ENCODE measurements at regions of chr19 and their contacts with region 1.

Region 1: DNA sequence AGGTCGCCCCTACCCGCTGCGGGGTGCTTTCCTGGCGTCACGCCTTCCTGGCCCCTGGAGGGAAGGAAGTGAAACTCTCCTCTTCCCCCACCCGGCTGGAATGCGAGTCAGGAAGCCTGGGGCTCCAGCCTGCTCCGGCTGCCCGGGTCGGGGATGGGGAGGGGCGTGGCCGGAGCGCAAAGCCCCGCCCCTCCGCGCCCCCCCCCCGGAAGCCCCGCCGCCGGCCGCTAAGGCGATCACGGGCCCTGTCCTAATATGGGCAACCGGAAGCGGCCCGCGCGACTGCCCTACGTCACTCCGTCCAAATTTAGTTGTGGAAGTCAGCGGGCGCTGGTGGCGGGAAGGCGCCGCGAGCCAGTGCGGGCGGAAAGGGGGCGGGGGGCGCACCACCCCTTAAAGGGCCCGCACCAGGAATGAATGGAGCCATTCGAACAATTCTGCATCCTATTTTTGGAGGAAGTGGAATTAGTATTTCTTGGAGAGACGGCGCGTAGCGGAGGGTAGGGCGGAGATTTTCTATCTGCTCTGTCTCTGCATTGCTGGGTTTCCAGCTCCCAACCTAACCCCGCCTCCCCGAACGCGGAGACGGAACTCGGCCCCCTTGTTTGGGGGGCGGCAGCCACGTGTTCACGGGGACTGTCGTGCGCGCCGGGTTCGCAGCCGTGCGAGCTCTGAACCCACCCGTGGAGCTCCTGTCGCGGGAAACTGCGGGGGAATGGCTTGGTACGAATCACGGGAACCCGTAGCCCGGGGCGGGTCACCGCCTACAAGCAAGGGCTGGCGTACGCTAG is 1.6 kb downstream of the IER2 start:
- DNase-seq: peak; percentile 94
- CTCF ChIP-seq: no peak

Region 2: DNA sequence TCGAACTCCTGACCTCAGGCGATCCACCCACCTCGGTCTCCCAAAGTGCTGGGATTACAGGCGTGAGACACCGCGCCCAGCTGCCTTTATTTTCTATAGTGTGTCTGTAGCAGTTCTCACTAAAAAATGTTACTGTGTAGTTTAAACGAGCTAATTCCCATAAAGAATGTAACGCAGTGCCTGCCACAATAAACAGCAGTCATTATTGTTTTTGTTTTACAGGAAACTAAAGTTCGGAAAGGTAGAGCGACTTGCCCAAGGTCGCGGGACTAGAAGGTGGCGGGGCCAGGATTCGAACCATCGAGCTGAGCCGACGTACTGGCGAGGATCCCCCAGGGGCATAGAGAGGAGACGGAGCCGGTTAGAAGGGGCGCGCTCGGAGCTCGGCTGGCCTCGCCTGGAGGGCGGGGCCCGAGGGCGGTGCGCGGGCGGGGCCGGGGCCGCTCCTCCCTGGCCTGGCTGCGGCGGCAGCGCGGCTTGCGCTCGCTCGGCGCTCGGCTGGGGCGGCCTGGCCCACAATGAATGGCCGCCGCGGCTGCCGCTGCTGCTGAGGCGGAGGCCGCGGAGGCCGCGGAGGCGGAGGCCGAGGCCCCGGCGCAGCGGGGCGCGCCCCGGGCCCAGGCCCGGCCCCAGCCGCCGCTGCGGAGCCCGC is 33.9 kb before region 1 on chr19 and contains the start of gene NACC1:
- CTCF ChIA-PET with region 1: interaction called, 3 read pairs
- POLR2A ChIA-PET with region 1: interaction called, 10 read pairs
- DNase-seq: peak; percentile 98
- CTCF ChIP-seq: no peak

Region 3: DNA sequence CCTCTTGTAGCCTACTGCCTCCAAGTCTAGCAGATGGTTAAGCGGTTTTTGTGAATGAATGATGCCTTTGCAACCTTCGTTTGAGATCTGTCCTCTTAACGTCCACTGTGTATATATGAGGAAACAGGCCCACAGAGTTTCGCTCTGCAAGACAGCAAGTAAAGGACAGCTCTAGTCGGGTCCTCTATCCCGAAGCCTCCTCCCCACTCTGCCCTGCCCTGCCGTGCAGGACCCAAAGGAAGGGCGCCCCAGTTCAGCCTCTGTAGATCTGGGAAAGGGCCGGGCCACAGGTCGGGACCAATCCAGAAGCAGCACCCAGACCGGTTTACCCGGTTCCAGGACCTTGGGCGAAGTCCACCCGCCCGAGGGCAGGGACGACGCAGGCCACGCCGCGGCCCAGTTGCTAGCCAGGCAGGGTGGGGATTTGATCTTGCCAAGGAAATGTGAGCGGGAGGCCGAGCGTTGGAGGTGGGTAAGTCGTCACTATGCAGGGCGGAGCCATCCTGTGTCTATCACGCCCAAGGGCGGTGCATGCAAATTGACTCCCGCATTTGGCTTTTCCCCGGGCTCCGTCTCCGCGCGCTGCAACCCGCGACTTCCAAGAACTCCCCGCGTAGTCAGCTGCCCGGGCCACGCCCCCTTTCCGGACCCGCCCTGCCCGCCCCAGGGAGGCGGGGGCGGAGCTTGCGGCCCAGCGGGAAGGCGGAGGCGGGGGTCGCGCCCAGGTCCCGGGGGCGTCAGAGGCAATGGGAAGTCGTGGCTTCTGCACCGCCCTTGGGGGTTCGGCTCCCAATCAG is 10.9 kb after region 1 on chr19:
- CTCF ChIA-PET with region 1: interaction called, 4 read pairs
- POLR2A ChIA-PET with region 1: interaction called, 15 read pairs
- DNase-seq: peak; percentile 79
- CTCF ChIP-seq: no peak

Region 4: GRCh38 chr19:13181747-13182388 is 30.1 kb after region 1 on chr19:
- CTCF ChIA-PET with region 1: no interaction called
- POLR2A ChIA-PET with region 1: interaction called, 13 read pairs
- DNase-seq: peak; percentile 64
- CTCF ChIP-seq: no peak

Measured in GM10248 (cell line).